ENCODE measurements at regions of chr7 and their contacts with region 1.

Region 1: DNA sequence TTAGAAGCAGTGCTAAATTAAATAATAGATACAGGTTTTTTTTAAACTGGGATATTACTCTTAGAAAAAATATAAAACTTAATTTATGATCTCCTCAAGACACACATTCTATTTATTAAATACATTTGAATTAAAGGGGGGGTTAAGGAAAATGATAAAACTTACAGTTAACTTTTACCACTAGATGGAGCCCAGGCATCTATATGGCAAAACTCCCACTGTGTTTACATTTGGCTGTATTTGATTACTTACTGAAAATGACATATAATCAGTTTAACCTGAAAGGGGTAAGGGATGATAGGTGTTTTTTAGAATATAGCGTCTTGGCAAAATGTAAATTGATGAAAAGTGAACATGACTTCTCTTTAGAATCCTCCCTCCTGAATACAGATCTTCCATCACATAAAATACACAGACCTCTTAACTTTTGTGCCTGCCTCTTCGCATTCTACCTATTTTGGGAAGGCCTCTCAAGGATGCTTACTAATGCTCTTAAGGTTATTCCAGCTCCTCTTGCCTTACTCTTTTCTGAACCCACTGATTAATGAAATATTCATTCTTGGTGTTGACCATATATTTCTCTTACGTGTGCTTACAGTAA is 235.7 kb downstream of the AGMO start:
- DNase-seq: no peak
- H3K4me3 Mint-ChIP-seq: no peak overlapping the region
- H3K27ac Mint-ChIP-seq: no peak overlapping the region
- H3K4me1 Mint-ChIP-seq: no peaks in the 10 kb centered on the region
- H3K27me3 Mint-ChIP-seq: no peaks in the 10 kb centered on the region

Region 2: DNA sequence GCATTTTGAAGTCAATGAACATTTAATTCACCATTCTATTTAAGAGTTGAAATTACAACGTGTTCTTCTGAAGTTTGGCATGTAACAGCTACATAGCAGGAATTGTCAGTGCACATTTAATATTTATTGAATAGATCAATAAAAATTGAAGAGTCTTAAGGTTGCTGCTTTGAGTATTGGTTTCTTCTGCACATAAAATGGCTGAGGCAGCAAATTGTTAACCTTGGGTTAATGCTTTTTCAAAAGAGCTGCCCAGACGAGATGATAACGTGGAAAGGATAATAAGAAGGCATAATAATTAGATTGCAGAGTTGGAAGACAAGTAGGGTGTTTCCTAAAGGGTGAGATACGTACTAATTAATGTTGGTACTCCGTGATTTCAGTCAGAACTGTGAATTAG is 32.0 kb after region 1 on chr7:
- intact Hi-C with region 1: no loop called
- DNase-seq: no peak
- H3K4me3 Mint-ChIP-seq: no peak overlapping the region
- H3K27ac Mint-ChIP-seq: no peak overlapping the region
- H3K4me1 Mint-ChIP-seq: no peaks in the 10 kb centered on the region
- H3K27me3 Mint-ChIP-seq: no peaks in the 10 kb centered on the region

Region 3: DNA sequence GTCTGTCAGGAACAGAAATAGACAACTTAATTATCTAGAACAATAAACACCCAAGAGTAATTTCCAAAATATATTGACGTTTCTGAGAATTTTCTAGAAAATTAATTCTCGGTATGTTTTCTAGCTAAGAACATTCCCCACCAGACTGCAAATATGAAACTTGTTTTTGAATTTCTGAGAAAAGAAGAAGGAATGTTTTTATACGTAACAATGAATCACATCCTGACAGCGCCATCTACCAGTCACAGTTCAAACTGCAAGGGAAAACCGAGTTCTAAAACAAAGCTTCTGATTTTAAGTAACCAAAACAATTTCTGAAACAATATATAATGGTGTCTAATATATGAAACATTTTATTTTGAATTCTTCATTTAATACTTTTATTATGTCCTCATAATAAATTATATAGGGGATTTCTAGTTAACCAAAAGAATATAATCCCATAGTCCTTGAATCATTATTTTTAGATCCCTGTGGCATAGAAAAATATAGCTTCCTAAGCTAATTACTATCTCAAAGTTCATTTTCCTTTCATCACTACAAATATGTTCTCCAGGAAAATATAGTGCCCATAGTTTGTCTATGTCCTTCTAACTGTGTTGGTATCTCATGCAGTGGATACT is 394.8 kb after region 1 on chr7:
- intact Hi-C with region 1: loop called (anchors 10 kb)
- DNase-seq: peak; percentile 58
- H3K4me3 Mint-ChIP-seq: no peak overlapping the region
- H3K27ac Mint-ChIP-seq: no peak overlapping the region
- H3K4me1 Mint-ChIP-seq: no peaks in the 10 kb centered on the region
- H3K27me3 Mint-ChIP-seq: no peaks in the 10 kb centered on the region

Region 4: GRCh38 chr7:16071246-16071857 is 745.2 kb after region 1 on chr7:
- intact Hi-C with region 1: loop called (anchors 2 kb)
- DNase-seq: peak; percentile 59
- H3K4me3 Mint-ChIP-seq: no peak overlapping the region
- H3K27ac Mint-ChIP-seq: no peak overlapping the region
- H3K4me1 Mint-ChIP-seq: no peaks in the 10 kb centered on the region
- H3K27me3 Mint-ChIP-seq: no peaks in the 10 kb centered on the region